Vagina (tissue), 2 donors: ENCODE measurements at regions of chr3 and their contacts with region 1.

Region 1: DNA sequence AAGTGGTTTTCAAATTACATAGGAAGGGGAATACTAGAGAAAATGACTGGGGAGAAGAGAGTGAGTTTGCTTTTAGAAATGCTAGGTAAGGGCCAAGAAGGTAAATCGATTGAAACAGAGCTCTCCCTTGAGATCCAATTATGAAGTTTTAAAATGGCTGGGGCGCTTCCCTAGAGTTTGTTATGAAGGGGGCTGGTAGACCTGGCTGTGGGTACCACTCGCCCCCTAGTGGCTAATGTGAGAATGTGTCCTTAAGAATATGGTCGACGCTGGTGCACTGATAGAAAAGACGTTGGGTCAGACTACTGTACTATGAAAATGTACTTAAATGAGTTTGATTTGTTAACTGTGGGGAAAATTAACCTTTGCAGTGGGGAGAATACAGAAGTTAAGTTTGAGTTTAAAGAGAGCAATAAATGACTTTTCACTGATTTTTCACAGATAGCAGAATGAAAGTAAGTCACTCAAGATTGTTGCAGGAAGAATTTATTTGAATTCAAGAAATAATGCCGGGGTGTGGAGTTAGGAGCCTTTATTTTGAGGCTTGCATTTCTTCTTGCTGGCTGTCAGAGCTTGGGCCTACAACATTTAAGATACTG is 9.2 kb downstream of the TMPRSS7 start:
- DNase-seq: no peak
- H3K4me3 ChIP-seq: no peak overlapping the region
- H3K27ac ChIP-seq: no peak overlapping the region
- H3K4me1 ChIP-seq: no peaks in the 10 kb centered on the region
- H3K27me3 ChIP-seq: no peaks in the 10 kb centered on the region
- CTCF ChIP-seq: peak; percentile 61 to 69 (median 67)
- POLR2A ChIP-seq: no peak

Region 2: DNA sequence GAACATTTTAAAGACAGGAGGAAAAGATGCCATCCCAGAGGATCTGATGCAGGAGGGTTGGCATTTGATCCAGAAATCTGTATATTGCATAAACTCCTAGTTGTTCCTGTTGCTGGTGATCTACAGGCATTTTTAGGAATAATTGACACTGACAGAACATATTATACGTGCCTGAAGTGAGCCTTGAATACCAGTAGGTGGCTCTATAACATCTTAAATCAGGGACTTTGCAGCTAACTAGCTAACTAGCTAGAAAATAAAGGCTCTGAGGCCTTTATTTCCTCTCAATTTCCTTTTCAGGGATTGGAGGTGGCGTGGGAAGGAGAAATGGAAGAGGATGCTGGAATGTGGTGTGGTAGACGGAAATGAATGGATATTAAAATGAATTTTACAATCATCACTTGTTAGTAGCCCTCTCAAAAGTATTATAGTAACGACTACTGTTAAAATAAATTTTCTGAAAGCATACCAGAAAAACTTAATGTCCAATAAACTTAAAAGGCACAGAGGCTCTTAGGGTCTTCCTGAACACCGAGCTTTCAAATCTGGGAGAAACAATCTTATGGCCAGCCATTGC is 374.7 kb before region 1 on chr3:
- intact Hi-C with region 1: loop called (anchors 10 kb)
- DNase-seq: no peak
- H3K4me3 ChIP-seq: no peak overlapping the region
- H3K27ac ChIP-seq: no peak overlapping the region
- H3K4me1 ChIP-seq: peaks cover 6% of the 10 kb centered on the region
- H3K27me3 ChIP-seq: no peaks in the 10 kb centered on the region
- CTCF ChIP-seq: peak; percentile 70 to 78 (median 70)
- POLR2A ChIP-seq: no peak

Region 3: DNA sequence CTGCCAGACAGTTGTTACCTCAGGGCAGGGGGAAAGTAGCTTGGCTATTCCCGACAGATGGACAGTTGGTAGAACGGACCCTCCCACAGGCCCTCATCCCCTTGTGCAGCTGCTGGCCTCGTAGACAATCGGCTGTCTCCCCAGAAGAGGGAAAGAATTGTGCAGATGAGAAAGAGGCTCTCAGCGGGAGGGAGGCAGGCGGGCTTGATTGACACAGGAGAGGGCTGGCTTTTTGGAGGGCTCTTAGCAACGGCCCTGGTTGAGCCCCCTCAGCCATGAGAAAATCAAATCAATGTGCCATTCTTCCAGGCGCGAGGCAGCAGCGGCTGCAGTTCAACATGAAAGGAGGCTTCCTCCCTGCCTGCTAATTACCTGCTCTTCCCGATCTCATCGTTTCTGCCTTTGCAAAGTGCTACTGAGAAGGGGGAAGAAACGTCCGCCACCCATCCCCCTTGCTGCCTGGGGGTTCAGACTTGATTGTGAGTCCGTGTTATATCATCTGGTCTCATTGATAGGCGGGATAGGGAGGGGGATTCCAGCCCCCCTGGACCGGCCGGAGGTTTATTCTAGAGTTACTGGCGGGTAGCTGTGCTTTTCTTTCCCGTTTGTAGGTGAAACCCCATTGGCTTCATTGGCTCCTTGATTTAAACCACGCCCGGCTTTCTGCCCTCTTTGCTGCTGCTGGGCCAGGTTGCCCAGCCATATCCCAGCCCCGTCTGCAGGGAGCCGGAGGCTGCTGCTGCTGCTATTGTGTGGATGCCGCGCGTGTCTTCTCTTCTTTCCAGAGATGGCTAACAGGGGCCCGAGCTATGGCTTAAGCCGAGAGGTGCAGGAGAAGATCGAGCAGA is 44.8 kb before region 1 on chr3 and contains the start of gene TAGLN3:
- intact Hi-C with region 1: no loop called
- DNase-seq: no peak
- H3K4me3 ChIP-seq: peak within 1 kb of the TSS; percentile 38
- H3K27ac ChIP-seq: no peak within 1 kb of the TSS
- H3K4me1 ChIP-seq: peaks cover 12% of the 10 kb centered on the region
- H3K27me3 ChIP-seq: no peaks in the 10 kb centered on the region
- CTCF ChIP-seq: no peak
- POLR2A ChIP-seq: no peak
- total RNA-seq, gene TAGLN3: 3.9 TPM